Mammary epithelial cell (primary cell): ENCODE measurements at regions of chr5 and their contacts with region 1.

Region 1: GRCh38 chr5:96336351-96336985 is 96.6 kb downstream of the PCSK1 start:
- DNase-seq: peak; percentile 75
- H3K4me3 ChIP-seq: no peak overlapping the region
- H3K27ac ChIP-seq: peak overlapping the region; percentile 74
- H3K4me1 ChIP-seq: peaks cover 35% of the 10 kb centered on the region
- H3K27me3 ChIP-seq: no peaks in the 10 kb centered on the region
- CTCF ChIP-seq: peak; percentile 92 to 94

Region 2: GRCh38 chr5:95664204-95664786 is 672.2 kb before region 1 on chr5:
- CTCF ChIA-PET with region 1: no interaction called
- dilution Hi-C with region 1: loop called (anchors 25 kb)
- in situ Hi-C with region 1: no loop called
- intact Hi-C with region 1: no loop called
- DNase-seq: peak; percentile 18
- H3K4me3 ChIP-seq: no peak overlapping the region
- H3K27ac ChIP-seq: no peak overlapping the region
- H3K4me1 ChIP-seq: peaks cover 4% of the 10 kb centered on the region
- H3K27me3 ChIP-seq: no peaks in the 10 kb centered on the region
- CTCF ChIP-seq: peak; percentile 79 to 89

Region 3: DNA sequence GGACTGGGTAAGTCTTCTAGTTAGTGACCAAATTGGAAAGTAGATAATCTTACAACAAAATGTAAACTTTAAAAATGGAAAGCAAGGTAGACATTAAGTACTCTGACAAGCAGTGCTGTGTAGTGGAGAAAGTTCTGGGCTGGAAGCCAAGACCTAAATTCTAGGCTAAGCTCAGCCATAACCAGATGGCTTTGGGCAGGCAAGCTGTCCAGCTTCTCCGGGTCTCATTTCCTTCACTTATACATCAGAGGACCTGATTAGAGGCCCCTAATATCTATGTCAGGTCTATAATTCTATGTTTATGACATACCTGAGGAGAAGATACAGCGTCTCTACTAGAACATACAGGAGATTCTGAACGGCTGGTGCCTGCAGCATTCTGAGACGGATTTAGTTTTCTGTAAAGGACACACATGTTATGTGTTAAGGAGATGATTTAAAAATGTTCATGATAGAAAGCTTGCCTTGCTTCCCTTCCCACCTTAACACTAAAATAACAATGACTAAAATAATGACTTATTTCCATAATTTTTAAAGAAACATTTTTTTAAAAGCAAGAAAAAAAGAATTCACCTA is 436.0 kb before region 1 on chr5:
- CTCF ChIA-PET with region 1: no interaction called
- dilution Hi-C with region 1: no loop called
- in situ Hi-C with region 1: no loop called
- intact Hi-C with region 1: loop called (anchors 5 kb)
- DNase-seq: no peak
- H3K4me3 ChIP-seq: no peak overlapping the region
- H3K27ac ChIP-seq: no peak overlapping the region
- H3K4me1 ChIP-seq: peaks cover 16% of the 10 kb centered on the region
- H3K27me3 ChIP-seq: no peaks in the 10 kb centered on the region
- CTCF ChIP-seq: no peak

Region 4: GRCh38 chr5:96079075-96079474 is 257.4 kb before region 1 on chr5:
- CTCF ChIA-PET with region 1: no interaction called
- dilution Hi-C with region 1: no loop called
- in situ Hi-C with region 1: no loop called
- intact Hi-C with region 1: loop called (anchors 1 kb)
- DNase-seq: peak; percentile 97
- H3K4me3 ChIP-seq: no peak overlapping the region
- H3K27ac ChIP-seq: peak overlapping the region; percentile 97
- H3K4me1 ChIP-seq: peaks cover 67% of the 10 kb centered on the region
- H3K27me3 ChIP-seq: no peaks in the 10 kb centered on the region
- CTCF ChIP-seq: no peak

Region 5: DNA sequence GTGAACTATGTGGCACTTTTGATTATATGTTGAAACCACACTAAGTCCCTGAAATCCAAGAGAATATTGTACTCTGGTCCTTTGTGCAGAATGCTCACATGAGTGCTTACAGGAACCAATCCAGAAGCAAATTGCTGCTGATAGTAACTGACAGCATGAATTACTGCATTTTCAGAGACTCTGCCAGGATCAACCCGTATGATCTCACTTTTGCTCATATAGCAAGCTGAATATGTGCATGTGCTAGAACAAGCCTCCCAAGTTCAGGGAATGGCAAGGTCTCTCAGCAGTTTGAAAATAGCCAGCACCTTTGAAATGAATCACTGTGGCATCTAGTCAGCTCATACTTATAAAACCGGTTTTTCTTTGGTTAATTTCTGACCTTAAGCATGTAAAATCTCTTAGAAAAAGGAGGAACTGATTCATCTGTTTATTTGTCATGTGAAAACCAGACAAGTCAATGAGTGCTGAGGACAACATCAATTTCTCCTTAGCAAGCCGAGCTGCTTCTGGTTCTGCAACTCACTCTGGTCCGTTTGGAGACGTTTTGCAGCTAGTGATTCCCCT is 159.1 kb before region 1 on chr5:
- CTCF ChIA-PET with region 1: no interaction called
- dilution Hi-C with region 1: no loop called
- in situ Hi-C with region 1: no loop called
- intact Hi-C with region 1: loop called (anchors 1 kb)
- DNase-seq: peak; percentile 99
- H3K4me3 ChIP-seq: no peak overlapping the region
- H3K27ac ChIP-seq: peak overlapping the region; percentile 50
- H3K4me1 ChIP-seq: peaks cover 40% of the 10 kb centered on the region
- H3K27me3 ChIP-seq: no peaks in the 10 kb centered on the region
- CTCF ChIP-seq: no peak

Region 6: DNA sequence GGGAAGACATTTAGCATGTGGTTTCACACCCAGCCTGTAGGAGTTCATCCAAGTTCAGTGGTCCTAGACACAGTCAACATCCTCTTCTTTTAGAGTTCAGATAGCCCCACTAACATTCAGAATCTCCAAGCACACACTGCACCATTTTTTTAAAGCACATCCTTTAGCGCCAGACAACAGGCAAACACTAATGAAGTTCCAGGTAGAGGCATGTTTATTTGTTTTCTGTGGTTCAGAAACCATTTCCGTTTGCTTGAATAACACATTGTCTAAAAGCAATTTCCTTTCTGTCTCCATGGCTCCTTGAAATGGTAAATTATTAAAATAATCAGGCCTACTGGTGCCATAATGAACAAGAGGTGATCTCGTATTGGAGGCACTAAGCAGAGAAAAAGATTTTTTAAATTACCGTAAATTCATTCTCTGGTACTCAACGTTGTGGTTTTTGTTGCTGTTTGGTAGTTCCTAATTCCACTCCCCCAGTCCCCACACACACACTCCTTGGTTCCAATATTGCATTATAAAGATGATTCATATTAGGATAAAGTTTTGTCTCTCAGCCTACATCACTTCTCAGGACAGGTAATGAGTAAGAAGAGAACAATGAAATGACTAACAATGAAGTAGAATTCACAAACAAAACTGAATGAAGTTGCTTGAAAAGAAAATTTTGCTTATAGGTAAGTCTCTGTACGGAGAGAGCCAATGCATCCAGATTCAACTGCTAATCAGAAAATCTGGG is 56.5 kb before region 1 on chr5:
- CTCF ChIA-PET with region 1: no interaction called
- dilution Hi-C with region 1: no loop called
- in situ Hi-C with region 1: no loop called
- intact Hi-C with region 1: loop called (anchors 2 kb)
- DNase-seq: peak; percentile 94
- H3K4me3 ChIP-seq: peak overlapping the region in 2 of 3 experiments; percentile 19 to 25
- H3K27ac ChIP-seq: peak overlapping the region; percentile 97
- H3K4me1 ChIP-seq: peaks cover 36% of the 10 kb centered on the region
- H3K27me3 ChIP-seq: no peaks in the 10 kb centered on the region
- CTCF ChIP-seq: peak in 1 of 2 donors; percentile 9

Region 7: GRCh38 chr5:96312383-96312782 is 24.1 kb before region 1 on chr5:
- CTCF ChIA-PET with region 1: no interaction called
- dilution Hi-C with region 1: no loop called
- in situ Hi-C with region 1: no loop called
- intact Hi-C with region 1: no loop called
- DNase-seq: no peak
- H3K4me3 ChIP-seq: no peak overlapping the region
- H3K27ac ChIP-seq: no peak overlapping the region
- H3K4me1 ChIP-seq: no peaks in the 10 kb centered on the region
- H3K27me3 ChIP-seq: no peaks in the 10 kb centered on the region
- CTCF ChIP-seq: no peak

Region 8: GRCh38 chr5:96509721-96510333 is 173.4 kb after region 1 on chr5:
- CTCF ChIA-PET with region 1: no interaction called
- dilution Hi-C with region 1: no loop called
- in situ Hi-C with region 1: no loop called
- intact Hi-C with region 1: no loop called
- DNase-seq: peak; percentile 79
- H3K4me3 ChIP-seq: no peak overlapping the region
- H3K27ac ChIP-seq: no peak overlapping the region
- H3K4me1 ChIP-seq: no peaks in the 10 kb centered on the region
- H3K27me3 ChIP-seq: no peaks in the 10 kb centered on the region
- CTCF ChIP-seq: no peak

Region 9: GRCh38 chr5:96629774-96630173 is 293.3 kb after region 1 on chr5:
- CTCF ChIA-PET with region 1: no interaction called
- dilution Hi-C with region 1: no loop called
- in situ Hi-C with region 1: no loop called
- intact Hi-C with region 1: no loop called
- DNase-seq: peak; percentile 99
- H3K4me3 ChIP-seq: no peak overlapping the region
- H3K27ac ChIP-seq: peak overlapping the region; percentile 84
- H3K4me1 ChIP-seq: peaks cover 59% of the 10 kb centered on the region
- H3K27me3 ChIP-seq: no peaks in the 10 kb centered on the region
- CTCF ChIP-seq: no peak